Caco-2 (cell line): ENCODE measurements at regions of chr5 and their contacts with region 1.

Region 1: GRCh38 chr5:90386099-90386710 is 23.4 kb downstream of the CETN3 start:
- DNase-seq: peak in 1 of 2 experiments; percentile 15
- H3K4me3 ChIP-seq: no peak overlapping the region
- H3K4me3 Mint-ChIP-seq: no peak overlapping the region
- H3K27ac Mint-ChIP-seq: no peak overlapping the region
- H3K4me1 ChIP-seq: no peaks in the 10 kb centered on the region
- H3K4me1 Mint-ChIP-seq: peaks cover 6% of the 10 kb centered on the region
- H3K27me3 ChIP-seq: no peaks in the 10 kb centered on the region
- H3K27me3 Mint-ChIP-seq: no peaks in the 10 kb centered on the region
- CTCF ChIP-seq: peak; percentile 51 to 61

Region 2: DNA sequence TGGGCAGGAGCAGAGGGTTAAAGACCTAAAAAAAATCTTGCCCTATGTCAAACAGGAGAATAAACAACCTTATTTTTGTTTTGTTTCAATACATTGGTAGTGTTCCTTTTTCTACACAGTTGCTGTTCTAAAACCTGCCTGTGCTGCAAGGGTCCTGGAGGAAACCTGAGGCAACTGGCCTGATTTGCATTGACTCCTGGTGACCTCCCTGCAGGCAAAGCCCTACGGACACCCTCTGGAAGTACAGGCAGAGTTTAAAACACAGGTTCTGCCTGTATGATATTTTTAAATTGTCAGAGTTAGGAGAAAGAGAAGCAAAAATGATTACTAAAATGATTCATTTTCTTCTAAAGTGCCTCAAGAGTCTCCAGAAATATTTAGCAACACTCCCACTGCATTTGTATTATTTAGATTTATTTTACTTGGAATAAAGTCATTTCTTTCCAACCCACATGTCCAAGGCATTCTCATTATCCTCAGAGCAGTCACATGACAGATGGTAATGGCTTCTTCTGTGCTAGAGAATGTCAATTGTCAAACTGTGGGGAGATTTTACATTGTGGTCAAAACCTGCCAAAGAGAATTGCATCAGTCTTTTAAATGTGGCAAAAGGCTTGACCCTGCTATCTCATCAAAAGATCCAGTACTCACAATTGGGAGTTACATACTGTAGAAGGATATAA is 536.2 kb before region 1 on chr5:
- CTCF ChIA-PET with region 1: no interaction called
- POLR2A ChIA-PET with region 1: no interaction called
- intact Hi-C with region 1: loop called (anchors 10 kb)
- DNase-seq: no peak
- H3K4me3 ChIP-seq: no peak overlapping the region
- H3K4me3 Mint-ChIP-seq: no peak overlapping the region
- H3K27ac Mint-ChIP-seq: no peak overlapping the region
- H3K4me1 ChIP-seq: peaks cover 7% of the 10 kb centered on the region; the same call in 1 of the 2 replicates
- H3K4me1 Mint-ChIP-seq: peaks cover 7% of the 10 kb centered on the region
- H3K27me3 ChIP-seq: no peaks in the 10 kb centered on the region
- H3K27me3 Mint-ChIP-seq: no peaks in the 10 kb centered on the region
- CTCF ChIP-seq: no peak

Region 3: DNA sequence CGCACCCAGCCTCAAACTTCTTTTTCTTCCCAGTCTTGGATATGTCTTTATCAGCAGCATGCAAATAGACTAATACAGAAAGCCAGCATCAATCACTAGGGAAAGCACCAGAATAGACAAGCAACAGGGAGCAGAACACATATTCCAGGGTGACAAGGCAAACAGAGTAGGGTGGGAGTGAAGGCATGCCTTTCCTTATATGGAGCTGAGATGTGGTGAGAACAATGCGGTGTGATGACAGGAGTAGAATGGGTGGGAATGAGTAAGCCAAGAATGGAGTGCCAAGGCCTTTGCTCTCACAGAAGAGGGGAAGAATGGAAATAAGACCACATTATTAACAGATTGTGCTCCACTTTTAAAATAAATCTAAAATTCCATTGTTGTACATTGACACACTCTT is 92.3 kb before region 1 on chr5:
- CTCF ChIA-PET with region 1: no interaction called
- POLR2A ChIA-PET with region 1: no interaction called
- intact Hi-C with region 1: loop called (anchors 1 kb)
- DNase-seq: peak; percentile 21 to 36
- H3K4me3 ChIP-seq: no peak overlapping the region
- H3K4me3 Mint-ChIP-seq: no peak overlapping the region
- H3K27ac Mint-ChIP-seq: no peak overlapping the region
- H3K4me1 ChIP-seq: peaks cover 16% of the 10 kb centered on the region
- H3K4me1 Mint-ChIP-seq: peaks cover 12% of the 10 kb centered on the region
- H3K27me3 ChIP-seq: no peaks in the 10 kb centered on the region
- H3K27me3 Mint-ChIP-seq: no peaks in the 10 kb centered on the region
- CTCF ChIP-seq: no peak

Region 4: GRCh38 chr5:90353254-90353653 is 33.0 kb before region 1 on chr5:
- CTCF ChIA-PET with region 1: no interaction called
- POLR2A ChIA-PET with region 1: no interaction called
- intact Hi-C with region 1: no loop called
- DNase-seq: no peak
- H3K4me3 ChIP-seq: no peak overlapping the region
- H3K4me3 Mint-ChIP-seq: no peak overlapping the region
- H3K27ac Mint-ChIP-seq: no peak overlapping the region
- H3K4me1 ChIP-seq: 0 out of 2 replicates have a peak, but pooled peaks cover 6% of the 10 kb centered on the region
- H3K4me1 Mint-ChIP-seq: no peaks in the 10 kb centered on the region
- H3K27me3 ChIP-seq: no peaks in the 10 kb centered on the region
- H3K27me3 Mint-ChIP-seq: no peaks in the 10 kb centered on the region
- CTCF ChIP-seq: no peak

Region 5: DNA sequence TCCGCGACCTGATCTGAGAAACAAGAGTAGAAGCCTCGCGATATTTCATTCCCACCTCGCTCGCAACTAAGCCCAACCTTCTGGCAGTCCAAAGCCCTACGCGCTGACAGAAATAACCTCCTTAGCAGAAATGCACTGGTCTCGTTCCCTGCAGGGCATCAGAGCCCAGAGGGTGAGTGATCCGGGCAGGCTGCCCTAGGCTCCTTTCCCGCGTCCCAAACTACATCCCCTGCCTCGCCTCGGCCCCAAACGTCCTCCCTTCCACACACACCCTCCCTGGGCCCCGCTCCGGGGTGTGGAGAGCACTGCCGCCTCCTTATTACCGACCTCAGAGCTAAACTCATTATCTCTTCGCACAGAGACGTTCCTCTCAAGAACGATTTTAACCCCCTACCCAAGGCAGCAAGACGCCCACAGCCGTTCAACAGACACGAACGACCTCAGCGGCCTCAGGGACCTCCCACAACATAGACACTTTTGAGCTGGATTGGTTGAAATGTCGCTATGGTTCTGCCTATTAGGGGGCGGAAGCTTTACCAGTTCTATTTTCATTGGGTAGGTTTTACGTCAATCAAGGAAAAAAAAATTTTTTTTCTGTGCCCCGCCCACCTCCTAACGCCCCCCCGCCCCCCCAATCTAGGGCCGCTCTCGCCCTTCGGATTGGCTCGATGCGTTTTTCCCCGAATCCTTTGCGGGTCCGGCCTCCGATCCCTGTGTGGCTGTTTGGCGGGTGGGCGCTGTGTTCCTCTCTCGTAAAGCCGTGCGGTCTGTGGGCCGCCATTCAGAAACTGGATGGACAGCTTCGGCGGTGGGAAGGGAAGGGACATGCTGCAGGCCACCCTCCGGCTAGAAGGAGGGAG is 23.3 kb after region 1 on chr5 and contains the start of gene CETN3:
- CTCF ChIA-PET with region 1: interaction called, 10 read pairs
- POLR2A ChIA-PET with region 1: no interaction called
- intact Hi-C with region 1: no loop called
- DNase-seq: peak; percentile 96 to 97
- H3K4me3 ChIP-seq: peak within 1 kb of the TSS; percentile 82
- H3K4me3 Mint-ChIP-seq: no peak within 1 kb of the TSS
- H3K27ac Mint-ChIP-seq: no peak within 1 kb of the TSS
- H3K4me1 ChIP-seq: peaks cover 9% of the 10 kb centered on the region; the same call in 1 of the 2 replicates
- H3K4me1 Mint-ChIP-seq: peaks cover 14% of the 10 kb centered on the region
- H3K27me3 ChIP-seq: no peaks in the 10 kb centered on the region
- H3K27me3 Mint-ChIP-seq: no peaks in the 10 kb centered on the region
- CTCF ChIP-seq: peak in 1 of 2 experiments; percentile 22
- total RNA-seq, gene CETN3: 38.5 and 42.7 TPM in 2 replicates

Region 6: DNA sequence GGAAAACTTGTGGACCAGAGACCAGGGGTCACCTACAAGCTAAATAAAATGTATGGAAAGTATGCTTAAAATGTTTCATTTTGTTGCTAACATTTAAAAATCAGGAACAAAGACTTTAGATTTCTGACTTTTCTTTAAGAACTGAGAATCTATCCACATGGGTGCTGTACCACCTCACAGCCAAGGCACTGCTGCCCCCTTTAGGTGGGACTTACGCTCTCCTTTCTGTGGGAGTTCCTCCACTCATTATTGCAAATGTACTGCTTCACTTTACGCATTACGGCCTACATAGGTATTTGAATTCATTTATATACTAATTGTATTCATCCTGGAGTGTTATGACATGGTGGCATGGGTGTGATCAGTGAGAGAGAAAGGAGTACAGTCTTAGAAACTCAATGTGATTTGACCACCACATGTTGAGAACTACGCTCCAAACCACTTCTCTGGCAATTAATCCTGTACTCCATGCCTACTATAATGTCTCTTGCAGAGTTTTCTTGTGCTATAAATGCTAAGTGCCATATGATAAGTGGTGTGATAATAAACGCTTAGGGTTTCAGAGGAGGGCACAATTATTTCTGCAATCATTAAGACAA is 48.0 kb after region 1 on chr5:
- CTCF ChIA-PET with region 1: no interaction called
- POLR2A ChIA-PET with region 1: no interaction called
- intact Hi-C with region 1: loop called (anchors 2 kb)
- DNase-seq: peak; percentile 55 to 77
- H3K4me3 ChIP-seq: no peak overlapping the region
- H3K4me3 Mint-ChIP-seq: no peak overlapping the region
- H3K27ac Mint-ChIP-seq: no peak overlapping the region
- H3K4me1 ChIP-seq: peaks cover 5% of the 10 kb centered on the region; the same call in 1 of the 2 replicates
- H3K4me1 Mint-ChIP-seq: peaks cover 6% of the 10 kb centered on the region
- H3K27me3 ChIP-seq: no peaks in the 10 kb centered on the region
- H3K27me3 Mint-ChIP-seq: peaks cover 10% of the 10 kb centered on the region
- CTCF ChIP-seq: peak; percentile 73 to 86